ENCODE measurements at regions of chr12 and their contacts with region 1.

Region 1: GRCh38 chr12:7188562-7189397 is 706 bp upstream of the PEX5 start:
- DNase-seq: peak; percentile 46
- H3K4me3 Mint-ChIP-seq: peak overlapping the region; percentile 90
- H3K27ac Mint-ChIP-seq: peak overlapping the region; percentile 96
- H3K4me1 Mint-ChIP-seq: peaks cover 16% of the 10 kb centered on the region
- H3K27me3 Mint-ChIP-seq: no peaks in the 10 kb centered on the region

Region 2: GRCh38 chr12:7018350-7019042 is 170.3 kb before region 1 on chr12 and contains the start of gene LPCAT3:
- intact Hi-C with region 1: loop called (anchors 2 kb)
- DNase-seq: peak; percentile 98
- H3K4me3 Mint-ChIP-seq: peak within 1 kb of the TSS; percentile 91
- H3K27ac Mint-ChIP-seq: peak within 1 kb of the TSS; percentile 84
- H3K4me1 Mint-ChIP-seq: peaks cover 24% of the 10 kb centered on the region
- H3K27me3 Mint-ChIP-seq: no peaks in the 10 kb centered on the region
- total RNA-seq, gene LPCAT3: 30.9 and 34.0 TPM in 2 replicates

Region 3: DNA sequence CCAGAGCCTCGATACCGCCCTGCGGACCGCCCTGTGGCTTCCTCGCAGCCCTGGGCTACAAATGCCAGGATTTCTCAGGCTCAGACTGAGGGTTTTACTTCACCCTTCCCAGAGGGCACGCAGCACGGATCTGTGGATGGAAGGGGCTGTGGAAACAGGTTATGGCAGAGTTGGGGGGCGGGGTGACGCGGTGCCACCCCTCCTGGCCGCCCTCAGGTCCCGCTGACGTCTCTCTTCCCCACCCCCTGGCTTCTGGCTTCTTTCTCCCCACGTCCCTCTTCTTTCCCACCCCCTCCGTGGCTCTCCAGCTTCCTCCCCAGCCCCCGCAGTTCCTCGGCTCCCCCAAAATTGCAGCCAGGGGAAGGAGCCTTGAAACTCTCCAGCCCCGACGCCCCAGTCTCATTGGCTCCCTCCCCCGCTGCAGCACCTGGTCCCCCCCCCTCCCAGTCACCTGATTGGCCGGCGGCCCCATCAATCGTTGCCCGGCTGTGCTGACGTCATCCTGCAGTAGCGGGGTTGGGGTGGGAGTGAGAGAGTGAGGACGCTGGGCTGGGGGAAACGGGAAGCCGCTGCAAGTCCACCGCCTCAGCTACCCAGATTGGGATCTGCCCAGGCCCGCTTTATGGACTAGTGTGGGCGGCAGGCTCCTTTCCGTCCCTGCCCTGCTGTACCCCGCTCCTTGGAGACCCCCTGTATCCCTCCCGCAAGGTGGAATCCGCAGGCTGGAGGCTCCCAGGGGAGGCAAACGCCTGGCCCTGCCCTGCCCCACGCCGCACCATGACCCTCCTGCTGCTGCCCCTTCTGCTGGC is 58.7 kb before region 1 on chr12 and contains the start of gene CLSTN3:
- intact Hi-C with region 1: loop called (anchors 2 kb)
- DNase-seq: peak; percentile 80
- H3K4me3 Mint-ChIP-seq: peak within 1 kb of the TSS; percentile 98
- H3K27ac Mint-ChIP-seq: peak within 1 kb of the TSS; percentile 93
- H3K4me1 Mint-ChIP-seq: peaks cover 28% of the 10 kb centered on the region
- H3K27me3 Mint-ChIP-seq: no peaks in the 10 kb centered on the region
- total RNA-seq, gene CLSTN3: 57.8 and 60.7 TPM in 2 replicates

Region 4: DNA sequence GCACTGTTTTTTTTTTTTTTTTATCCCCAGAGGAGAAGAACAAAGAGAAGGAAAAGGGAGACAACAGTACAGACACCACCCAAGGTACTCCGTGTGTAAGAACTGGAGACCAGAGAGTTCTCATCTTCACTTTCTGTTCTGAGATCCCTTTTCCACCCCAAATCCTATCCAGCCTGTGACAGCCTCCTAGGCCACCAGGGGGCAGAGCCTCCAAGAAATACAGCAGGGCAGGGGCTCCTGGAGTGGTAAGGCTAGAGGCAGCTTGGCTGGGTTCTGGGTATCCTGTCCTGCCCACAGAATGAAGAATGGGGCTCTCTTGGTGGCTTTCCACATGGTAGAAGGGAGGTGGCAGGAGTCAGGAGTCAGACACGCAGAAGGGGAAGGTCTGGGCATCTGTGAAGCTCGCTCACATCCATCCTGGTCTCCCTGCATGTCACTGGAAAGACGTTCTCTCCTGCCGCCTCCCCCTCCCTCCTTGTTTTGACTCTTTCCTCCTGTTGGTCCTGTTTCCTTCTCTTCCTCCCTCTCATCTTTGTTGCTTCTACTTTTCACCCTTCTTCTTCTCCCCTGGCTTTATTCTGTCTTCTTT is 46.6 kb before region 1 on chr12:
- intact Hi-C with region 1: loop called (anchors 1 kb)
- DNase-seq: peak; percentile 38
- H3K4me3 Mint-ChIP-seq: no peak overlapping the region
- H3K27ac Mint-ChIP-seq: no peak overlapping the region
- H3K4me1 Mint-ChIP-seq: peaks cover 5% of the 10 kb centered on the region
- H3K27me3 Mint-ChIP-seq: no peaks in the 10 kb centered on the region

Region 5: DNA sequence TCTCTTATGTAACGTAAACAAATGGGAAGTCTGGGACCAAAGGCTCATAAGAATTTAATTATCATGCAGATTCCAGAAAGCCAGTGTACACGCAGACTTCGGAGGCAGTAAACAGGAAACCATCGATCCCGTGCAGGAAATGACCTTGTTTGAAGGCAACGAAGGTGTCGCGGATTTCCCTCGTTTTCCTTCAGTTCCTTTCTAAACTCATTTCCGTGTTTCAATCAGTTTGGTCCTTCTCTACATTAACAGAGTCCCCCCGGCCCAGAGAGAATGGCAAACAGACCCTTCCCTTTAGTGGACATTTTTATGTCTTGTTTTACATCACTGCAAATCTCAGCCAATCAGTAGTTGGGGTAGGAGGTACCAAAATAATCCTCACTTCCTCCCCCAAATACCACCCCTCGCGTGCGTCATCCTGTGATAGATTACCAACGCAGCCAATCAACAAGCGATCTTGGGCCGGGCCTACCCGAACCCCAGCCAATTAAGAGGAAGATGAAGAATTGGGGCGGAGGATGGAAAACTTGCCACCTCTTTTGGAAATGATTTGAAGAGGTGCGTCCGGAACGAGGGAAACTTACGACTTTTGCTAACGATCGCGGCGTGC is 837.6 kb after region 1 on chr12:
- intact Hi-C with region 1: loop called (anchors 2 kb)
- DNase-seq: peak; percentile 97
- H3K4me3 Mint-ChIP-seq: peak overlapping the region; percentile 85
- H3K27ac Mint-ChIP-seq: peak overlapping the region; percentile 99
- H3K4me1 Mint-ChIP-seq: peaks cover 7% of the 10 kb centered on the region
- H3K27me3 Mint-ChIP-seq: no peaks in the 10 kb centered on the region

Measured in activated T-helper 2 cell treated with anti-CD3 and anti-CD28 coated beads, Interferon-gamma antibody, Interleukin-2, Interleukin-4, amounts not matched to agents 10 μg/mL and 5 μg/mL and 100 μg/mL, durations not matched to agents 14 hours and 24 hours and 36 hours (primary cell).